ENCODE measurements at regions of chr12 and their contacts with region 1.

Region 1: DNA sequence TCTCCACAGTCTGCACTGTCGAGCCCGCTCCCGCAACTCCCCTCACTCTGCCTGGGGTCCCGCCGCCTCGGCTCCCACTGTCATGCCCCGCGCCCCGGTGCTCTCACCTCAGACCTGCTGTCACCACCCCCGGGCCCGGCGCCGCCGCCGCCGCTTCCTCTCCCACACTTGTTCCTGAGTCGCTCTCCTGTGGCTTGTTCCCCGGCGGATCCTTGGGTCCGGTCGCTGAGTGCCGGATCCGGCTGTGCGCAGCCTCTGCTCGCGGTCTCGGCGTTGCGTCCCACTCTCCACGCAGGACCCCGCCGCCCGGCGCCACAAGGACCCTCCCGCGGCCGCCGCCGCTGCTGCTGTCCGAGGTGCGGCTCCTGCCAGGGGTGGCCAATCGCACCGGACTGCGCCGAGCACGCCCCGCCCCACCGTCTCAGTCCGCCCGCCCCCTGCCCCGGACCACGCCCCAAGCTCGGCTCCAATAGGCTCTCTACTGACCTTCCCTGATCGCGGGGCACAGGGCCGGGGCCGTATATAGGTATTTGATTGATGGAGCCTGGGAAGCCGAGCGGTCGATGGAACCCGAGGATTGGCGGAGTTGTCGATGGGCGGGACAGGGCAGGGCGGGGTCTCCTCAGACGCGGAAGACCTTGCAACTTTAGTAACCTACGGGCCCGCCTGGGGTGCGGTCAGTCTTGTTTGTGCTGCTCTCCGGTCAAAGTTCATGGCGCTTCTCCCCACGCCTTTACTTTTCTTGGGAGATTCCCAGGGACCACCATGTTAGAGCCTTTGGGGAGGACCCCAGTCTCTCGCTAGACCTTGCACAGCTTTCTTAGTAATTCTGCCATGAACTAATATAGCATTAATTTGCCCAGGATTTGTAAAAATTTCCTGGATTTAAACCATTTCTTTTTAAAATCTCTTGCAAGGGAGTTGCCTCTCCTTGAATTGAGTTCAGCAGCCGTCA is at the start of gene TAOK3:
- DNase-seq: peak; percentile 97
- ATAC-seq: peak; percentile 87
- H3K4me3 ChIP-seq: peak within 1 kb of the TSS; percentile 89 to 96 (median 90)
- H3K4me3 Mint-ChIP-seq: peak within 1 kb of the TSS; percentile 84
- H3K27ac ChIP-seq: peak within 1 kb of the TSS; percentile 77 to 79
- H3K27ac Mint-ChIP-seq: peak within 1 kb of the TSS; percentile 81
- H3K4me1 ChIP-seq: peaks cover 32 to 40% of the 10 kb centered on the region in 2 donors
- H3K4me1 Mint-ChIP-seq: peaks cover 48% of the 10 kb centered on the region
- H3K27me3 ChIP-seq: no peaks in the 10 kb centered on the region
- H3K27me3 Mint-ChIP-seq: no peaks in the 10 kb centered on the region
- CTCF ChIP-seq: no peak
- total RNA-seq, gene TAOK3: 69.6 and 80.4 TPM in 2 replicates

Region 2: DNA sequence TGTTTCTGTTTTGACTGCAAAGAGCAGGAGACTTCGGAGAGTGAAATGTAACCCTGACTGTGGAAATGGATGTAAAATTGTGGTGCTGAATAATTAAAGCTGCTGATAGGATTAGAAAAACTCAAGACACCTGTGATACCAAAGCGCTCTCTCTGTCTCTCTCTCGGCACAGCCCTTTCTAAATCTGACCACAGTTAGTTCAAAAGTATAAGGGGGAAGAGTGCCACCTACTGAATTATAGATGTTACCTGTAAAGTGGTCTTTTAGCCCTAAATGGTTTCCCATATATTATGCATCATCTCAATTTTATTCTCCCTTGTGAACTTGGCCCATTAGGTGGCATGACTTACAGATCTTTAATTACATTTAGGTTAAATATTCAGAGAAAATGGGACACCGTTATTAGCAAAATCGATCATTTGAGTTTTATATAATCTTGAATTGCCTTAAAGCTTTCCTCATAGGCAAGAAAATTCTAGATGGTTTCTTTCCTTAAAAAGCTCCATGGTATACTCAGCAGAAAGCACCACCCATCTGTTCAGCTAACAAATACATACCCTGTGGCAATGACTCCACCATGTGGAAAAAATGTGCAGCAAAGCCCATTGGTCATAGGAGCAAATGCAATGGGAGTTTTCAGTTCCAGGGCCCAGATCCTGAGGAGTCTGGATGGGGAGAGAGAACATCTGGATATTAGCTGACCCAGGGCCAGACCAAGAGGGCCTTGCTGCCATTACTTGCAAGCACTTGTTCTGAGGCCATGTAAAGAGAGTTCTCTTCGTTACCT is 338.2 kb before region 1 on chr12:
- CTCF ChIA-PET with region 1: no interaction called
- POLR2A ChIA-PET with region 1: no interaction called
- intact Hi-C with region 1: no loop called
- DNase-seq: no peak
- ATAC-seq: no peak
- H3K4me3 ChIP-seq: no peak overlapping the region
- H3K4me3 Mint-ChIP-seq: no peak overlapping the region
- H3K27ac ChIP-seq: no peak overlapping the region
- H3K27ac Mint-ChIP-seq: peak overlapping the region; percentile 26
- H3K4me1 ChIP-seq: peaks cover 8 to 10% of the 10 kb centered on the region in 2 donors
- H3K4me1 Mint-ChIP-seq: peaks cover 15% of the 10 kb centered on the region
- H3K27me3 ChIP-seq: no peaks in the 10 kb centered on the region
- H3K27me3 Mint-ChIP-seq: no peaks in the 10 kb centered on the region
- CTCF ChIP-seq: no peak

Region 3: DNA sequence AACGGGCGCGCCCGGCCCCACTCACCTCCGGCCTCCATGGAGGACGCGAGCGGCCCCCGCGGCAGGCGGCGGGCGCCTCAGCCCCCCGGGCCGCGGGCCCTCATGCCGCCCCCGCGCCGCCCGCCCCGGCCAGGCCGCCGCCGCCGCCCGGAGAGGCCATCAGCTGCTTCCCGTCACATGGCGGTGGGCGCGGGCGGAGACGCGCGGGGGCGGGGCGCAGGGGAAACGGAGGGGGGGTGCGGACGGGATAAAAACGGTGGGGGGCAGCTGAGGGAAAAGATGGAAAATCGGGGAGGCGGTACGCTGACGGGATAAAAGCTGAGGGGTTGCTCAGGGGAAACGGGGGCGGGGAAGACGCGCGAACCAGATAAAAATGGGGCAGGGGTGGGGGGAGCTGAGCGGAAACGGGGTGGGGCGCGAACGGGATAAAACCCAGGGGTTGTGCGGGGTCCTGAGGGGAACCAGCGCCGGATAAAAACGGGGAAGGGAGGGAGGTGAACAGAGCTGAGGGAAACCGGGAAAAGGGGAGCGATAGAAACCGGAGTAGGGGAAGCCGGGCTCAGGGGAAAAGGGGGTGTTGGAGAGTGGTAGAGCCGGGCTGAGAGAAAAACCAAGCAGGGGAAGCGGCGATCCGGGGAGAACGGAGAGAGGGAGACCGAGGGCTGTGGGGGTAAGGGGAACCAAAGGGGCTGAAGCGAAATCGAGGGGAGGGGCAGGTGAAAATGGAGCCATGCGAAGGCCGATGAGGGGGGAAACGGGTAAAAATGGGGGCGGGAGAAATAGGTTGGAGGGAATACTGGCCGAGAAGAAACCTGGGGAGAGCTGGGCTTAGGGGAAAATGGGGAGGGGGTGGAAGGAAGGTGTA is 311.6 kb before region 1 on chr12 and contains the start of gene WSB2:
- CTCF ChIA-PET with region 1: interaction called, 6 read pairs
- POLR2A ChIA-PET with region 1: interaction called, 3 read pairs
- intact Hi-C with region 1: loop called (anchors 1 kb)
- DNase-seq: peak; percentile 55
- ATAC-seq: peak; percentile 63
- H3K4me3 ChIP-seq: peak within 1 kb of the TSS; percentile 58 to 92 (median 80)
- H3K4me3 Mint-ChIP-seq: peak within 1 kb of the TSS; percentile 92
- H3K27ac ChIP-seq: peak within 1 kb of the TSS; percentile 56 to 82
- H3K27ac Mint-ChIP-seq: peak within 1 kb of the TSS; percentile 88
- H3K4me1 ChIP-seq: peaks cover 31 to 39% of the 10 kb centered on the region in 2 donors
- H3K4me1 Mint-ChIP-seq: peaks cover 45% of the 10 kb centered on the region
- H3K27me3 ChIP-seq: no peaks in the 10 kb centered on the region
- H3K27me3 Mint-ChIP-seq: peaks cover 3% of the 10 kb centered on the region
- CTCF ChIP-seq: no peak
- total RNA-seq, gene WSB2: 21.4 and 26.8 TPM in 2 replicates

Region 4: DNA sequence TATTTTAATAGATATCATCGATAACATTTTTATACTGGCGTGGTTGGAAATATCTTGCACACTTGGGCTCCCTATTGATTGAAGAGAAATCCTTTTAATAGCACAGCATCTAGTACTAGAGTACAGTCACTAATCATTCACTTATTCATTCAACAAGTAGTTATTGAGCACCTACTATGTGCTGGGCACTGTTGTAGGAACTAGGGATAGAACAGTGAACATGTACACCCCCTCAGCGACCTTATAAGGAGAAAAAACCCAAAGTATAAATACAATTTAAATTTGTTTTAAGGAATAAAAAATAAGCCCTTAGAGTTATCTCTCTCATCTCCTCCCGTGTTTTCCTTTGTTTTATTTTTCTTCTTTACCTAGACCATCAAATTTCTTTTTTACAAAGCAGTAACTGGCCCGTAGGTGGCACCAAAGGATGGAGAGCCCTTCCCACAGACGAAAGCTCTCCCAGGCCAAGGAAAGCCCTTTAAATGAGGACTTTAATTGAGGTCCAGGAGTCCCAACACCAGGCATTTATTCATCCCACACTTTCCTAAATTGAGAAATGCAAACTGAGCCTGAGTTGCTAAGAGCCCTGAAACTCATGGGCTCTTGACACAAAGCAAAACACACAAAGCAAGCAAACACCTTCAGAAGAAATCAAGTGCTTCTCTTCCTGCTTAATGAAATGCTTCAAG is 207.9 kb before region 1 on chr12:
- CTCF ChIA-PET with region 1: interaction called, 62 read pairs
- POLR2A ChIA-PET with region 1: interaction called, 4 read pairs
- intact Hi-C with region 1: loop called (anchors 1 kb)
- DNase-seq: no peak
- ATAC-seq: no peak
- H3K4me3 ChIP-seq: no peak overlapping the region
- H3K4me3 Mint-ChIP-seq: no peak overlapping the region
- H3K27ac ChIP-seq: no peak overlapping the region
- H3K27ac Mint-ChIP-seq: no peak overlapping the region
- H3K4me1 ChIP-seq: no peaks in the 10 kb centered on the region
- H3K4me1 Mint-ChIP-seq: peaks cover 12% of the 10 kb centered on the region
- H3K27me3 ChIP-seq: no peaks in the 10 kb centered on the region
- H3K27me3 Mint-ChIP-seq: no peaks in the 10 kb centered on the region
- CTCF ChIP-seq: peak; percentile 59

Region 5: GRCh38 chr12:118219772-118220171 is 153.0 kb before region 1 on chr12:
- CTCF ChIA-PET with region 1: interaction called, 11 read pairs
- POLR2A ChIA-PET with region 1: interaction called, 3 read pairs
- intact Hi-C with region 1: no loop called
- DNase-seq: no peak
- ATAC-seq: no peak
- H3K4me3 ChIP-seq: no peak overlapping the region
- H3K4me3 Mint-ChIP-seq: peak overlapping the region; percentile 14
- H3K27ac ChIP-seq: peak overlapping the region in 1 of 2 donors; percentile 70
- H3K27ac Mint-ChIP-seq: peak overlapping the region; percentile 26
- H3K4me1 ChIP-seq: peaks cover 17 to 18% of the 10 kb centered on the region in 2 donors
- H3K4me1 Mint-ChIP-seq: peaks cover 20% of the 10 kb centered on the region
- H3K27me3 ChIP-seq: no peaks in the 10 kb centered on the region
- H3K27me3 Mint-ChIP-seq: no peaks in the 10 kb centered on the region
- CTCF ChIP-seq: no peak

Region 6: GRCh38 chr12:118330421-118331018 is 42.3 kb before region 1 on chr12:
- CTCF ChIA-PET with region 1: interaction called, 11 read pairs
- POLR2A ChIA-PET with region 1: interaction called, 3 read pairs
- intact Hi-C with region 1: no loop called
- DNase-seq: peak; percentile 70
- ATAC-seq: peak; percentile 91
- H3K4me3 ChIP-seq: peak overlapping the region in 1 of 5 experiments; percentile 33
- H3K4me3 Mint-ChIP-seq: peak overlapping the region; percentile 42
- H3K27ac ChIP-seq: peak overlapping the region; percentile 7 to 83
- H3K27ac Mint-ChIP-seq: peak overlapping the region; percentile 80
- H3K4me1 ChIP-seq: peaks cover 21 to 41% of the 10 kb centered on the region in 2 donors
- H3K4me1 Mint-ChIP-seq: peaks cover 54% of the 10 kb centered on the region
- H3K27me3 ChIP-seq: no peaks in the 10 kb centered on the region
- H3K27me3 Mint-ChIP-seq: no peaks in the 10 kb centered on the region
- CTCF ChIP-seq: no peak

Region 7: GRCh38 chr12:118418385-118419057 is 45.7 kb after region 1 on chr12:
- CTCF ChIA-PET with region 1: no interaction called
- POLR2A ChIA-PET with region 1: no interaction called
- intact Hi-C with region 1: no loop called
- DNase-seq: no peak
- ATAC-seq: no peak
- H3K4me3 ChIP-seq: no peak overlapping the region
- H3K4me3 Mint-ChIP-seq: no peak overlapping the region
- H3K27ac ChIP-seq: no peak overlapping the region
- H3K27ac Mint-ChIP-seq: no peak overlapping the region
- H3K4me1 ChIP-seq: no peaks in the 10 kb centered on the region
- H3K4me1 Mint-ChIP-seq: no peaks in the 10 kb centered on the region
- H3K27me3 ChIP-seq: no peaks in the 10 kb centered on the region
- H3K27me3 Mint-ChIP-seq: no peaks in the 10 kb centered on the region
- CTCF ChIP-seq: no peak

Measured in B cell (primary cell).